ENCODE measurements at regions of chr17 and their contacts with region 1.

Region 1: DNA sequence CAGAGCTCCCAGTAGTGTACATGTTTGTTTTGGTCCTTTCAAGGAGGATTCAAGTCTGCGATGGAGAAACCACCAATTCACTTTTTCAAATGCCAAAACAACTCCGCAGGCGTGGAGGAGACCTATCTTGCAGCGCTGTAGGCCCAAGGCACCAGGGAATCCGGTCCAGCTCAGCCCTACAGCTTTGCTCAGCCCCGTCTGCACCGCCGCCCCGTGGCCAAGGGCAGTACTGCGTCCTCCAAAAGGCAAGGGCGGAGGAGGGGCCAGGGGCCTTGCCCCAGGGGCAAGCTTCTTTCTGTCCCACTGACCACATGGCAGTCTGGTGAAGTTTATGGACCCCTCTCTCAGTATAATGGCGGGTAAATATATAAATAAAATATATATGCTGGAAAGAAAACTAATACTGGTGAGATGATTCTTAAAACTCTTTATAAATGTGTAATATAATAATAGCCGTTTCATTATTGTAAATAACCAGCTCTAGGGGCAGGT is 709 bp upstream of the CD300LG start:
- DNase-seq: peak; percentile 86
- H3K4me3 ChIP-seq: no peak overlapping the region
- H3K27ac ChIP-seq: no peak overlapping the region
- H3K4me1 ChIP-seq: no peaks in the 10 kb centered on the region
- H3K27me3 ChIP-seq: no peaks in the 10 kb centered on the region
- CTCF ChIP-seq: peak; percentile 98

Region 2: DNA sequence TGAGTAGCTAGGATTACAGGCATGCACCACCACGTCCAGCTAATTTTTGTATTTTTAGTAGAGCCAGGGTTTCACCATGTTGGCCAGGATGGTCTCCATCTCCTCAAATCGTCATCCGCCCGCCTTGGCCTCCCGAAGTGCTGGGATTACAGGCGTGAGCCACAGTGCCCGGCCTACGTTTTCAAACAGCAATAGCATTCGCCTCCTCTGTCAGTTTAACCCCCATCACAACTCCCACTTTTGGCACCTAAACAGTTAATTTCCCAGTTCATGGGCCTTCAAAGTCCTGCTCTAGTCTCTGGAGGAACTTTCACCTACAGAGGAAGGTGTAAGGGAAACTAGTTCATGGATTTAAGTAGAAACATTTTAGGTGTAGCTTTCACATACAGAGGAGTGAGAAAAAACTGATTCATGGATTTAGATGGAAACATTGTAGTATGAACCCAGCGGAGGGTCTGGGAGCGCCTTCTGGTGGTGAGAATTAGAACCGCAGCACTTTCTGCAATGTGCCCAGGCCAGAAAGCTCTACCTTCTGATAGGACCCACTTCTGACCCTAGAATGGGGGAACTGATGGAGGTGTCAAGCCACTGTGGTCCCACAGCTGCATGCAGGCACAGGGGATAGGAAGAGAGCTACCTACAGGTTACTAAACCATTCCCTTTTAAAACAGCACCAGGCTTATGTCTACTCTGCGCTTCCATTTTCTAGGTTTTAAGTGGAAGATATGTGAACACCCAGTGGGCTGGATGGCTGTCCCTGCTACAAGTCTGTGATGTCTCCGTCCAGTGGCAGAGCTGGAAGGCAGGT is 172.5 kb before region 1 on chr17:
- intact Hi-C with region 1: no loop called
- DNase-seq: peak; percentile 81
- H3K4me3 ChIP-seq: no peak overlapping the region
- H3K27ac ChIP-seq: no peak overlapping the region
- H3K4me1 ChIP-seq: no peaks in the 10 kb centered on the region
- H3K27me3 ChIP-seq: no peaks in the 10 kb centered on the region
- CTCF ChIP-seq: peak; percentile 93

Region 3: GRCh38 chr17:43784628-43785101 is 61.6 kb before region 1 on chr17:
- intact Hi-C with region 1: loop called (anchors 5 kb)
- DNase-seq: no peak
- H3K4me3 ChIP-seq: no peak overlapping the region
- H3K27ac ChIP-seq: no peak overlapping the region
- H3K4me1 ChIP-seq: no peaks in the 10 kb centered on the region
- H3K27me3 ChIP-seq: no peaks in the 10 kb centered on the region
- CTCF ChIP-seq: no peak

Measured in colonic mucosa (tissue), 4 donors.